ENCODE measurements at regions of chr3 and their contacts with region 1.

Region 1: GRCh38 chr3:58013973-58014649 is 5.9 kb downstream of the FLNB start:
- DNase-seq: no peak
- ATAC-seq: no peak
- H3K4me3 ChIP-seq: no peak overlapping the region
- H3K4me3 Mint-ChIP-seq: no peak overlapping the region
- H3K27ac ChIP-seq: no peak overlapping the region
- H3K27ac Mint-ChIP-seq: no peak overlapping the region
- H3K4me1 ChIP-seq: peaks cover 45% of the 10 kb centered on the region
- H3K4me1 Mint-ChIP-seq: peaks cover 83% of the 10 kb centered on the region
- H3K27me3 ChIP-seq: no peaks in the 10 kb centered on the region
- H3K27me3 Mint-ChIP-seq: no peaks in the 10 kb centered on the region
- CTCF ChIP-seq: no peak

Region 2: GRCh38 chr3:57992452-57993213 is 21.5 kb before region 1 on chr3:
- CTCF ChIA-PET with region 1: no interaction called
- POLR2A ChIA-PET with region 1: no interaction called
- intact Hi-C with region 1: no loop called
- DNase-seq: no peak
- ATAC-seq: no peak
- H3K4me3 ChIP-seq: no peak overlapping the region
- H3K4me3 Mint-ChIP-seq: no peak overlapping the region
- H3K27ac ChIP-seq: no peak overlapping the region
- H3K27ac Mint-ChIP-seq: no peak overlapping the region
- H3K4me1 ChIP-seq: no peaks in the 10 kb centered on the region
- H3K4me1 Mint-ChIP-seq: no peaks in the 10 kb centered on the region
- H3K27me3 ChIP-seq: no peaks in the 10 kb centered on the region
- H3K27me3 Mint-ChIP-seq: no peaks in the 10 kb centered on the region
- CTCF ChIP-seq: no peak

Region 3: GRCh38 chr3:58073301-58074108 is 59.4 kb after region 1 on chr3:
- CTCF ChIA-PET with region 1: no interaction called
- POLR2A ChIA-PET with region 1: interaction called, 3 read pairs
- intact Hi-C with region 1: loop called in 1 of 2 experiments (anchors 5 kb)
- DNase-seq: no peak
- ATAC-seq: no peak
- H3K4me3 ChIP-seq: no peak overlapping the region
- H3K4me3 Mint-ChIP-seq: no peak overlapping the region
- H3K27ac ChIP-seq: no peak overlapping the region
- H3K27ac Mint-ChIP-seq: no peak overlapping the region
- H3K4me1 ChIP-seq: peaks cover 9% of the 10 kb centered on the region
- H3K4me1 Mint-ChIP-seq: peaks cover 48% of the 10 kb centered on the region
- H3K27me3 ChIP-seq: no peaks in the 10 kb centered on the region
- H3K27me3 Mint-ChIP-seq: no peaks in the 10 kb centered on the region
- CTCF ChIP-seq: no peak

Measured in CD4-positive, alpha-beta T cell (primary cell).